ENCODE measurements at regions of chr12 and their contacts with region 1.

Region 1: DNA sequence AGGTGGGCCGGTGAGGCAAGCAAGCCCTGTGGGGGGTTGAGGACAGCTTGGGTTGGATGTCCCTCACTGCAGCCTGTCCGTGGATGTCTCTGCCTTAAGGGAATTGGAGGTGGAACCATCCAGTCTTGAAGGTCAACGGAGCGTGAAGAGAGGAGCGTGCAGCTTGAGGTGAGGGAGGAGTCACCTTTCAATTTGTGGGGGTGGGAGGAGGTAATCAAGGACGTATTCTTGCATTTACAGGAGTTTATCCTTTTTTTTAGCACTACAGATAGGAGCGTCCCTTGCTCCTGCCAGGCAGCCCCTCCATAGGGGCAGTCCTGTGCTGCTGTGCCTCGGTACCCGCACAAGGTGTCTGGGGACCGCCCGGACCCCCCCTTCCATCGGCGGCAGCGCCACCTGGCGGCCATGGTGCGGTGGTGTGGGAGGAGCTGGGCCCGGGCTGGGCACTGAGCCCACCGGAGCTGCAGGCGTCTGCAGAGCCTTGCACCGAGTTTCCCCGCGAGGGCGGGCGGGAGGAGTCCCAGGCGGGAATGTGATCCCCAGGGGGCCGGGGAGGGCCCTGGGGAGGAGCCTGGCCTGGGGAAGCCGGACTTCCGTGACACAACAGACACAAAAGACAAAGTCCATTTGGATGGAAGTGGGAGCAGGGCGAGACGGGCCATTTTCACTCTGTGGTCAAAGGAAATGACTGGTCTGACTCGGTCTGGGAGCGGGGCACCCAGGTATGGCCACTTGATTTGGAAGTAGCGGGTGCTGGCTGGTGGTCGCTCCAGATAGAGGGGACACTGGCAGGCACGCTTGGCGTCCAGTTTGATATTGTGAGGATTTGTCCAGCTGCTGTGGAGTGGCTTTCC is 923 bp downstream of the DNAJC22 start:
- DNase-seq: peak; percentile 54 to 69 (median 69)
- H3K4me3 ChIP-seq: peak overlapping the region in 5 of 7 experiments; percentile 22 to 66 (median 34)
- H3K27ac ChIP-seq: no peak overlapping the region
- H3K4me1 ChIP-seq: peaks cover 0 to 49% (median 38%) of the 10 kb centered on the region in 4 experiments
- H3K27me3 ChIP-seq: peaks cover 4 to 81% (median 48%) of the 10 kb centered on the region in 5 experiments

Region 2: DNA sequence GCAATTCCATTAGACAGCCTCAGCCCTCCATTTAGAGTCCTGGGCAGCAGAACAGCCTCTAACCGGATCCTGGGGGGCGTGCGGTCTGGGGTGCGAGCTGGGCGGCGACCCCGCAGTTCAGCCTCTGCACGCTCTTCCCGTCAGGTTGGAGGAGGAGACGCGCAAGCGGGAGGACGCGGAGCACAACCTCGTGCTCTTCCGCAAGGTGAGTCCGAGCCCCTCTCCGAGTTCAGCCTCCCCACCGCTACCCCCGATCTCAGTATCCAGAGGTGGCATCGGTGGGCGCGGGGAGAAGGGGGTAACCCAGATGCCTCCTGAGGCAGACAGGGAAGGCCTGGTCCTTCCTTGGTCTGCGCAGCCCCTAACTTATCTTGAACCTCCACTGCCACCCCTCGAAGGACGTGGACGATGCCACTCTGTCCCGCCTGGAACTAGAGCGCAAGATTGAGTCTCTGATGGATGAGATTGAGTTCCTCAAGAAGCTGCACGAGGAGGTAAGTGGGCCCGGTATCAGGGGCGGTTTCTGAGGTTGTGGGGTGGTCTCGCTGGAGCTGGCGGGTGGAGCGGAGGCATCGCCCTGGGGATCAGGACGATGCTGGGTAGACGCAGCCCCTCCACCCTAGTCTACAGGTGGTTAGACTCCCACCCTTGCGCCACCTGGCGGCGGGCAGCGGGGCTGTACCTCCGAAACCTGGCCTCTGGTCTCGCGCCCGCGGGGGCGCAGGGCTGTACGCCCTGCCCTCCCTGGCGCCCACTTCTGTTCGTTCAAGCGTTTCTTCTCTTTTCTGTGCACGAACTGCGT is 51.4 kb before region 1 on chr12:
- CTCF ChIA-PET with region 1: interaction called, 124 read pairs
- POLR2A ChIA-PET with region 1: no interaction called
- DNase-seq: peak; percentile 63 to 74 (median 73)
- H3K4me3 ChIP-seq: peak overlapping the region in 4 of 7 experiments; percentile 19 to 48 (median 39)
- H3K27ac ChIP-seq: no peak overlapping the region
- H3K4me1 ChIP-seq: peaks cover 0 to 30% (median 18%) of the 10 kb centered on the region in 4 experiments
- H3K27me3 ChIP-seq: peaks cover 0 to 71% (median 54%) of the 10 kb centered on the region in 5 experiments

Region 3: GRCh38 chr12:49336645-49337584 is 10.7 kb before region 1 on chr12 and contains the start of gene C1QL4:
- CTCF ChIA-PET with region 1: interaction called, 46 read pairs
- POLR2A ChIA-PET with region 1: no interaction called
- DNase-seq: peak; percentile 78 to 84 (median 84)
- H3K4me3 ChIP-seq: peak within 1 kb of the TSS in 6 of 7 experiments; percentile 23 to 55 (median 41)
- H3K27ac ChIP-seq: no peak within 1 kb of the TSS
- H3K4me1 ChIP-seq: peaks cover 0 to 20% (median 10%) of the 10 kb centered on the region in 4 experiments
- H3K27me3 ChIP-seq: peaks cover 7 to 100% (median 46%) of the 10 kb centered on the region in 5 experiments